ENCODE measurements at regions of chr1 and their contacts with region 1.

Region 1: DNA sequence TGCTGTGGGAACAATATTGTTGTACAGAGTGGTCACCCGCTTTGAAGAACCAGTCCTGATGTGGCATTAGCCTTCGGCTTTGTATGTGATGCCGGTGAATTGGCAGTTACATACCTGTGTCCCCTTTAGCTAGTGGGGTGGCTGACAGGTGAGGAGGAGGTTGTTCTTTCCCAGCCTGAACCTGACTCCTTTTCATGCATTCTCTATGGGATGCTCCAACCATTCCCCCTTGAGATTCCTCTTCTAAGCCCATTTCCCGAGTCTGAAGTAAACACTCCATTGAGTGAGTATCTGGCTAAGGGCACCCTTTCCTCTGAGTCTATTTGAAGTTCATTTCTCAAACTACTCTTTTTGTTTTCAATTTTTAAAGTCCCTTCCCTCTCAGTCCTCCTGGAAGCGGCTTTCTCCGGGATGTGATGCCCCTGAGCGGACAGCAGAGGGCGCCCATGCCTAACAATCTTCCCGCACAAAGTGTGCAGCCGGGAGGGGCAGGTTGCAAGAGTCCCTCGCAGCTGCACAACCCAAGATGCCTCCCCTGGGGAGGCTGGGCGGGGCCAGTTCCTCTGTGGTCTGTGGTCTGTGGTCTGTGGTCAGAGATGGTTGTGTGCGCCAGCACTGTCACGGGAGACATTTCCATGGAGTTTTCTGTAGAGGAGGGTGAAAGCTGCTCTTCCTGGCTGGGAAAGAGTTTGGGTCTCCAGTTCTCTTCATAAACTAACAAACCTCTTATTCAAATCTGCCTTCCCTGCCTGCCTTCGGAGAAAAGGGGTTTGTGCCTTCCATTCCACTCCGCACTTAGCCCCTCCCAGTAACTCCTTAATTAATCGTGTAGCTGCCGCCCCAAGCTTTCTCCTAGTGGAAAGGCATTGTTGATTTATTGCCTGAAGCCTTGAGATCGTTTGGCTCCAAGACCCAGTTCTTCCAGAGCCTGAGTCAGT is 36.4 kb upstream of the LMX1A start:
- DNase-seq: peak; percentile 91 to 93 (median 92)
- H3K4me3 ChIP-seq: peak overlapping the region in 1 of 2 donors; percentile 4
- H3K4me3 Mint-ChIP-seq: peak overlapping the region; percentile 63 to 84 (median 81)
- H3K27ac ChIP-seq: no peak overlapping the region
- H3K27ac Mint-ChIP-seq: peak overlapping the region; percentile 67 to 93 (median 83)
- H3K4me1 ChIP-seq: peaks cover 23% of the 10 kb centered on the region
- H3K4me1 Mint-ChIP-seq: peaks cover 14 to 26% (median 20%) of the 10 kb centered on the region in 4 donors
- H3K27me3 ChIP-seq: peaks cover 39% of the 10 kb centered on the region
- H3K27me3 Mint-ChIP-seq: peaks cover 40 to 53% of the 10 kb centered on the region in 2 donors

Region 2: DNA sequence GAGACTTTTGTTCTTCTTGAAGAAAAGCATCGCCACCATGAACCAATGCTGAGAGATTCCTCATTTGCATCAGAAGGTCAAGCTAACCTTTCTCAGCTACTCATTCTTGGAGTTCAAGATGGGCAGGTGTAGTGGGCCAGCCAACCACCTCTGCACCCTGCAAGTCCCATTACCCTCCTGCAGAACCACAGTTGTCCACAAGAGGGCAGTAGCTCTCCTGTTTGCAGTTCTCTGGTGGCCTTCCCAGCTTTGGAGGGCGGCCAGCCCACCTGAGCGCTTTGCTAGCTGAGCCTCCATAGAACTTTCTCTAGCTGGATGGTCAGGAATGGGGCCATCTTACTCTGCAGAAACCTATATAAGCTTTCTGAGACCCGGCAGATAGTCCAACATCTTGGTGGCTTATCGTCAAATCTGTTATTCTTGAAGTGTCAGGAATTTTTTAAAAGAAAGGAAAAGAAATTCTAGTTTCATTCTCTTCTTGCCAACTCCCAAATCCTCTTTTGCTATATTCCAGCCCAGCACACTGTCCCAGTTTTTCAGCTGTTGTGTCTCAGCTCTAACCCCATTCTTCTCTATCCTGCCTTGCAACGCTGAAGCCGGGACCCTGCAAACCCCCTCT is 25.4 kb before region 1 on chr1:
- CTCF ChIA-PET with region 1: interaction called, 69 read pairs
- POLR2A ChIA-PET with region 1: no interaction called
- intact Hi-C with region 1: loop called (anchors 2 kb)
- DNase-seq: peak; percentile 57 to 70 (median 63)
- H3K4me3 ChIP-seq: no peak overlapping the region
- H3K4me3 Mint-ChIP-seq: no peak overlapping the region
- H3K27ac ChIP-seq: no peak overlapping the region
- H3K27ac Mint-ChIP-seq: no peak overlapping the region
- H3K4me1 ChIP-seq: no peaks in the 10 kb centered on the region
- H3K4me1 Mint-ChIP-seq: peaks cover 0 to 10% (median 2%) of the 10 kb centered on the region in 4 donors
- H3K27me3 ChIP-seq: peaks cover 4% of the 10 kb centered on the region
- H3K27me3 Mint-ChIP-seq: peaks cover 38 to 48% of the 10 kb centered on the region in 2 donors

Region 3: DNA sequence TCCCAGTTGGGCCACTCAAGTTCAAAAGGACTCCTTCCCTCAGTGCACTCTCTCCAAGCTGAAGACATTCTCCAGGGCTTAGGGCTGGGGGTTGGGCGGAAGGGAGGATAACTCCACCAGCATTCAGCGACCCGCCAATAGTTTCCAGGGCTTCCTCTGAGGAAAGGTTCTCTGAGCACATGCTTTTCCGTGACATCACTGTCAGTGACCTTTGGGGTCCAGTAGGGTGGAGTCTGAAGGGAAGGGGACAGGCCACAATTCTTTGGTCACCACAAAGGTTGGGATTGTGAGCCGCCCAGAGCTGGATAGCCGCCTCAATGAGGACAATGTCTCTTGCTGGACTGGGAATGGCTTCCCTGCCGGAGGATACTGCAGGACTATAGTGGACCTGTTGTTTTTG is 74.8 kb after region 1 on chr1:
- CTCF ChIA-PET with region 1: no interaction called
- POLR2A ChIA-PET with region 1: no interaction called
- intact Hi-C with region 1: no loop called
- DNase-seq: no peak
- H3K4me3 ChIP-seq: no peak overlapping the region
- H3K4me3 Mint-ChIP-seq: no peak overlapping the region
- H3K27ac ChIP-seq: no peak overlapping the region
- H3K27ac Mint-ChIP-seq: no peak overlapping the region
- H3K4me1 ChIP-seq: no peaks in the 10 kb centered on the region
- H3K4me1 Mint-ChIP-seq: no peaks in the 10 kb centered on the region
- H3K27me3 ChIP-seq: no peaks in the 10 kb centered on the region
- H3K27me3 Mint-ChIP-seq: peaks cover 18 to 19% of the 10 kb centered on the region in 2 donors

Region 4: GRCh38 chr1:165586435-165586834 is 193.5 kb after region 1 on chr1:
- CTCF ChIA-PET with region 1: interaction called, 275 read pairs
- POLR2A ChIA-PET with region 1: interaction called, 33 read pairs
- intact Hi-C with region 1: no loop called
- DNase-seq: no peak
- H3K4me3 ChIP-seq: no peak overlapping the region
- H3K4me3 Mint-ChIP-seq: no peak overlapping the region
- H3K27ac ChIP-seq: no peak overlapping the region
- H3K27ac Mint-ChIP-seq: peak overlapping the region in 1 of 7 donors; percentile 2
- H3K4me1 ChIP-seq: no peaks in the 10 kb centered on the region
- H3K4me1 Mint-ChIP-seq: no peaks in the 10 kb centered on the region
- H3K27me3 ChIP-seq: no peaks in the 10 kb centered on the region
- H3K27me3 Mint-ChIP-seq: peaks cover 20 to 39% of the 10 kb centered on the region in 2 donors

Region 5: GRCh38 chr1:165914136-165914798 is 521.4 kb after region 1 on chr1:
- CTCF ChIA-PET with region 1: interaction called, 35 read pairs
- POLR2A ChIA-PET with region 1: interaction called, 3 read pairs
- intact Hi-C with region 1: loop called (anchors 1 kb)
- DNase-seq: peak; percentile 61 to 71 (median 67)
- H3K4me3 ChIP-seq: no peak overlapping the region
- H3K4me3 Mint-ChIP-seq: no peak overlapping the region
- H3K27ac ChIP-seq: no peak overlapping the region
- H3K27ac Mint-ChIP-seq: peak overlapping the region in 1 of 7 donors; percentile 31
- H3K4me1 ChIP-seq: no peaks in the 10 kb centered on the region
- H3K4me1 Mint-ChIP-seq: peaks cover 0 to 4% (median 3%) of the 10 kb centered on the region in 4 donors
- H3K27me3 ChIP-seq: no peaks in the 10 kb centered on the region
- H3K27me3 Mint-ChIP-seq: no peaks in the 10 kb centered on the region